ENCODE measurements at regions of chr17 and their contacts with region 1.

Region 1: GRCh38 chr17:35312790-35313711 is 60.4 kb downstream of the SLFN11 start:
- DNase-seq: peak; percentile 94
- H3K4me3 Mint-ChIP-seq: peak overlapping the region; percentile 85
- H3K27ac Mint-ChIP-seq: peak overlapping the region; percentile 88
- H3K4me1 Mint-ChIP-seq: peaks cover 34% of the 10 kb centered on the region
- H3K27me3 Mint-ChIP-seq: peaks cover 3% of the 10 kb centered on the region

Region 2: GRCh38 chr17:35088881-35089585 is 224.0 kb before region 1 on chr17:
- intact Hi-C with region 1: no loop called
- DNase-seq: peak; percentile 97
- H3K4me3 Mint-ChIP-seq: peak overlapping the region; percentile 95
- H3K27ac Mint-ChIP-seq: peak overlapping the region; percentile 96
- H3K4me1 Mint-ChIP-seq: peaks cover 44% of the 10 kb centered on the region
- H3K27me3 Mint-ChIP-seq: no peaks in the 10 kb centered on the region

Region 3: DNA sequence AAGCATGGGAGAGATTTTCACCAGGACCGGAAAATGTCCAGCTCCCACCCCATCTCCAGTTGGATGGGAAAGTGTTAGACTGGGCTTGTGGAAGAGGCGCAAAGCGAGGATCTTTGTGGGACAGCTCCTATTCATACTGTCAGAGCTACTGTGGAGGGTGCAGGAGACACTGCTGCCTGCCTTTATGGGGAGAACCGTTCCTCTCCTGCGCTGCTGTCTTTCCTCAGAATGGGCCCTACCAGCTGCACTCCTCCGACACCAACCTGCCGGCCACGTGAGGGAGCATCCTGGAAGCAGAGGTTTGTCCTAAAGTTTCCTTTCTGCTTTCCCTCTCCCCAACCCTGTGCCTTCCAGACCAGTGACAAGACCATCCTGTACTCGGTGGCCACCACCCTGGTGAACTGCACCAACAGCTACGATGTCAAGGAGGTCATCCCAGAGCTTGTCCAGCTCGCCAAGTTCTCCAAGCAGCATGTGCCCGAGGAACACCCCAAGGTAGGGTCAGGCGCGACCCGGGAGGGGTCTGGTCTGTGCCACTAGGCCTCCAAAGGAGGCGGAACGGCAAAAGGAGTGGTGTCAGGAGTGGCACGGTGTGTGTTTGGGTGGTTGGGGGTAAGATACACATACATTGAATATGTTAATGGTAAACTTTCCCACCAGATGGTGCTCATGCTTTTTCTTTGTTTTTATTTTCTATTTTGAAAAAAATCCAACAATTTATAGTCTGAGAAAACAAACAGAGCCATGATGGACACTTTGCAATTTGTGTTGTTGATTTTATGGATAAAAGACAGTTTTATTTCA is 141.9 kb before region 1 on chr17:
- intact Hi-C with region 1: loop called (anchors 5 kb)
- DNase-seq: peak; percentile 78
- H3K4me3 Mint-ChIP-seq: peak overlapping the region; percentile 19
- H3K27ac Mint-ChIP-seq: no peak overlapping the region
- H3K4me1 Mint-ChIP-seq: peaks cover 27% of the 10 kb centered on the region
- H3K27me3 Mint-ChIP-seq: no peaks in the 10 kb centered on the region

Region 4: DNA sequence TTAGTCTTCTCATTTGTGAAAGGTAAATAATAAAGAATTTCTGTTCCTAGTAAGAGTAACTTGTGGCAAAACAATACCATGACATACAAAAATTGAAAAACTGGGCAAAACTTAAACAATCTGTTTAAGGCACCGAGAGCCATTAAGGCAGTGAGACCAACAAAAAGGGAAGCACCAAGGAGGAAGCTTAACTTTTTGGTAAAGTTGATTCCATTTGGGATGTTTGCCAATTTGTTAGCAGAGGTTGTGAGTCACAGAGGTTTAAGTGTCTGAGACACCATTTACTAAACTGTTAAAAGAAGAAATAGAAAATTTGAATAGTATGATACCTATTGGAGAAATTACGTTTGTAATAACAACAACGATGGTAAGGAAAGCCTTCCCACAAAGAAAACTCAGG is 123.8 kb before region 1 on chr17:
- intact Hi-C with region 1: no loop called
- DNase-seq: no peak
- H3K4me3 Mint-ChIP-seq: no peak overlapping the region
- H3K27ac Mint-ChIP-seq: no peak overlapping the region
- H3K4me1 Mint-ChIP-seq: peaks cover 41% of the 10 kb centered on the region
- H3K27me3 Mint-ChIP-seq: no peaks in the 10 kb centered on the region

Region 5: DNA sequence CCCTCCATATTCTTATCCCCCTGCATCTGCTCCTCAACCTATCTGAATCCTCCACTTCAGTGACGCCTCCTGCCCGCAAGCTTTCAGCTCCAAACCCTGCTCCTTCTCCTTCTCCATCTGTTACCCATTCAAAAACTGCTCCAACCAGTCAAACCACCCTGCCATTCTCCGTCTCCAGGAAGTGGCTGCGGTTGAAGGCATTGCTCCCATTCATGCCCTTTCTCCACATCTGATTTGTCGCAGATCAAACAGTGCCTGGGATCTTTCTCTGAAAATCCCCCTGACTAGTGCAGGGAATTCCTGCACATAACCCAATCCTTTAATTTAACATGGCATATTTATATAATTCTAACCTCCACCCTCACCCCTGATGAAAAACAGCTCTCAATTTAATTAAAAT is 13.9 kb before region 1 on chr17:
- intact Hi-C with region 1: no loop called
- DNase-seq: no peak
- H3K4me3 Mint-ChIP-seq: no peak overlapping the region
- H3K27ac Mint-ChIP-seq: no peak overlapping the region
- H3K4me1 Mint-ChIP-seq: no peaks in the 10 kb centered on the region
- H3K27me3 Mint-ChIP-seq: peaks cover 27% of the 10 kb centered on the region

Region 6: DNA sequence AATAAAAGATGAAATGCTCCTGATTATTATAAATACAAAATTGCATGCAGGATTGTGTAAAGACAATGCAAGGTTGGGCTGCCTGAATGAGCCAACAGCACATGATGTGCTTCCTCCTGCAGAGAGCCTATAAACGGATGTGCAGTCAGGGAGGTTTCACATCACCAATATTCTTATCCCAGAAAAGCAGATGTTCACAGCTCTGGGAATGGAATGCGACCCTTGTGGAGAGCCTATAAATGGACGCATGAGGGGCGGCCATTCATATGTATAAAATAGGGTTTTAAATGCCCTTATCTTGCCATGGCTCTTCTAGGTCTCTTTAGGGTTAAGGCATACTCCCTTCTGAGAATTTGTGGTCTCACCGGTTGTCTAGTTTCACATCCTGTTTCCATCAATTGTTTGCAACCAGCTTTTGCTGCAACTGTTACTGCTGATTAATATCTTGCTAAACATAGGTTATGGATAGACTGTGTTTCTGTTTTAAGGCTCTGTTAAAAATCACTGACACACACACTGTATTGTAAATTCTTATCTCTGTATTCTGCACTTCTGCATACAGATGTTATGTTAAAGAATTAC is 28.5 kb after region 1 on chr17:
- intact Hi-C with region 1: loop called (anchors 2 kb)
- DNase-seq: peak; percentile 84
- H3K4me3 Mint-ChIP-seq: peak overlapping the region; percentile 53
- H3K27ac Mint-ChIP-seq: peak overlapping the region; percentile 17
- H3K4me1 Mint-ChIP-seq: peaks cover 29% of the 10 kb centered on the region
- H3K27me3 Mint-ChIP-seq: peaks cover 31% of the 10 kb centered on the region

Region 7: GRCh38 chr17:35373534-35373983 is 60.5 kb after region 1 on chr17 and contains the start of gene SLFN11:
- intact Hi-C with region 1: loop called (anchors 2 kb)
- DNase-seq: peak; percentile 95
- H3K4me3 Mint-ChIP-seq: peak within 1 kb of the TSS; percentile 89
- H3K27ac Mint-ChIP-seq: peak within 1 kb of the TSS; percentile 93
- H3K4me1 Mint-ChIP-seq: peaks cover 51% of the 10 kb centered on the region
- H3K27me3 Mint-ChIP-seq: peaks cover 1% of the 10 kb centered on the region
- total RNA-seq, gene SLFN11: 72.3 and 73.6 TPM in 2 replicates

Region 8: DNA sequence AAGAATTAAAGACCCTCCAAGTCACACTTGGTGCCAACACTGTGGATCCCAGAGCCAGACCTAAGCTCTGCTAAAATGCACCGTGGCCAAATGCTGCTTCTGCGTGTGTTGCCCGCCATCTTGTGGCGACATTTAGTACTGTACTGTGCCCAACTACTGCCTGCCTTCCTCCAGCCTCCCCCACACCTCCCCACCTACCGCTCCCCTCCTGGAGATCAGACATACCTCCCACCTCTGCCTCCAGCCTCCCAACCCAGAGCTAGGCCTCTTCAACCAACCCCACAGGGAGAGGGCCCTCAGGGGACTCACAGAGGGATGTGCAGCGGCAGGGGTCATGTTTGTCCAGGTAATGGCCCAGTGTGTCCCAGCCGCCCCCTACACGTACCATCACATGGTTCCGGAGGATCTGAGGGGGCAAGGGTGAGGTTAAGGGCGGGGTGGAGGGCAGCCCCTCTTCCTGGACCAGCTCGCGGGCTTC is 434.5 kb after region 1 on chr17:
- intact Hi-C with region 1: loop called (anchors 2 kb)
- DNase-seq: peak; percentile 93
- H3K4me3 Mint-ChIP-seq: no peak overlapping the region
- H3K27ac Mint-ChIP-seq: no peak overlapping the region
- H3K4me1 Mint-ChIP-seq: peaks cover 18% of the 10 kb centered on the region
- H3K27me3 Mint-ChIP-seq: peaks cover 30% of the 10 kb centered on the region